Left ventricle myocardium superior (tissue), 1 donor: ENCODE measurements at regions of chr12 and their contacts with region 1.

Region 1: GRCh38 chr12:17763366-17763765 is 326.6 kb downstream of the RERGL start:
- DNase-seq: no peak
- ATAC-seq: no peak

Region 2: GRCh38 chr12:17084831-17085230 is 678.5 kb before region 1 on chr12:
- intact Hi-C with region 1: no loop called
- DNase-seq: no peak
- ATAC-seq: no peak

Region 3: GRCh38 chr12:17579205-17580026 is 183.9 kb before region 1 on chr12:
- intact Hi-C with region 1: no loop called
- DNase-seq: no peak
- ATAC-seq: no peak

Region 4: GRCh38 chr12:17841496-17841895 is 78.1 kb after region 1 on chr12:
- intact Hi-C with region 1: loop called (anchors 10 kb)
- DNase-seq: no peak
- ATAC-seq: no peak